HEK293 (cell line): ENCODE measurements at regions of chr19 and their contacts with region 1.

Region 1: DNA sequence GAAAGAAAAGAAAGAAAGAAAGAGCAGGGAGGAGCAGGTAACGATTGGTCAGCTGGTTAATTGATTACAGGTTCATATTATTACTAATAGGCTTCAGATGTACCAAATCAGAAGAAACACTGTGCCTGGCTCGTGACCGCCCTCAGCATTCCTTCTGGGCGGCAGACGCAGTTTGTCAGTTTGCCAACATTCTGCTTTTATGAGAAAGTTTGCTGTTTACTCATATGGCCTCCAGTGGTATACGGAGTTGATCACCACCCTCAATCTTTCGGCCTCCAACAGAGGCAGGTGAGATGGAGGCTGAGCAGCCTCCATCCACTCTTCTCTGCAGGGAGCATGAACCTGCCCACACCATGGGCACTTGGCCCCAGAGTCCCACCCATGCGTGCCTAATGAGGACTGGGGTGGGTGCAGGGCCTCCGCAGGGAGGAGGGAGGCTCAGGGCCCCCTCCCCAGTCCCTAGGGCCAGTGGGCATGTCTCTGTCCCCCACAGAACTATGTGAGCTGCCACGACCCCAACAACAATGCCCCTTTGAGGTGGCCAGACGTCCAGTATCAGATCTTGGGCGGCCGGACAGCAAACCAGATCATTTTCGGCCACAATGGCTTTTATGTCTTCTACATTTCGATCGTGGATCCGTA is 8.8 kb downstream of the PRR22 start:
- H3K4me3 ChIP-seq: no peak overlapping the region
- H3K27ac ChIP-seq: no peak overlapping the region
- H3K4me1 ChIP-seq: no peaks in the 10 kb centered on the region
- CTCF ChIP-seq: no peak

Region 2: GRCh38 chr19:5753743-5754142 is 22.0 kb before region 1 on chr19:
- CTCF ChIA-PET with region 1: no interaction called
- POLR2A ChIA-PET with region 1: no interaction called
- H3K4me3 ChIP-seq: no peak overlapping the region
- H3K27ac ChIP-seq: no peak overlapping the region
- H3K4me1 ChIP-seq: no peaks in the 10 kb centered on the region
- CTCF ChIP-seq: no peak

Region 3: GRCh38 chr19:5790573-5791520 is 15.1 kb after region 1 on chr19 and contains the start of gene DUS3L:
- CTCF ChIA-PET with region 1: interaction called, 25 read pairs
- POLR2A ChIA-PET with region 1: interaction called, 3 read pairs
- H3K4me3 ChIP-seq: peak within 1 kb of the TSS; percentile 71
- H3K27ac ChIP-seq: peak within 1 kb of the TSS; percentile 82
- H3K4me1 ChIP-seq: no peaks in the 10 kb centered on the region
- CTCF ChIP-seq: peak; percentile 23

Region 4: DNA sequence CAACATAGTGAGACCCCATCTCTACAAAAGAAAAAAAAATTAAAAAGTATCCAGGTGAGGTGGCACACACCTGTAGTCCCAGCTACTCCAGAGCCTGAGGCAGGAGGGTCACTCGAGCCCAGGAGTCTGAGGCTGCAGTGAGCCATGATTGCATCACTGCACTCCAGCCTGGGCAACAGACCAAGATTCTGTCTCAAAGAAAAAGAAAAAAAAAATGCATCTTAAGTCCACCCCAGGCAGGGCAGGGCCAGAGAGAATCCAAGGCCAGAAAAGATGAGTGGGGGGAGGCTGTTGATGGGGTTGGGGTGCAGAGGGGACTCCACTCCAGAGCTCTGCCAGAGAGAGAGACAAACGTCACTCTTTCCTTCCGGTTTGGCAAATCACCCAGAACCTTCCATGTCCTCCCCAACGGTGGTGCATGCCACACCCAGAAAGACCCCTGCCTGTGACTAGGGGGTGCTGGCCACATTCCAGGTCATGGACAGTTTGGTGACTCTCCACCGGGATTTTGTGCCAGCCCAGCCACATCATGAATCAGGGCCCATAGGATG is 75.0 kb after region 1 on chr19:
- CTCF ChIA-PET with region 1: no interaction called
- POLR2A ChIA-PET with region 1: no interaction called
- H3K4me3 ChIP-seq: no peak overlapping the region
- H3K27ac ChIP-seq: no peak overlapping the region
- H3K4me1 ChIP-seq: no peaks in the 10 kb centered on the region
- CTCF ChIP-seq: no peak